ENCODE measurements at regions of chr1 and their contacts with region 1.

Region 1: DNA sequence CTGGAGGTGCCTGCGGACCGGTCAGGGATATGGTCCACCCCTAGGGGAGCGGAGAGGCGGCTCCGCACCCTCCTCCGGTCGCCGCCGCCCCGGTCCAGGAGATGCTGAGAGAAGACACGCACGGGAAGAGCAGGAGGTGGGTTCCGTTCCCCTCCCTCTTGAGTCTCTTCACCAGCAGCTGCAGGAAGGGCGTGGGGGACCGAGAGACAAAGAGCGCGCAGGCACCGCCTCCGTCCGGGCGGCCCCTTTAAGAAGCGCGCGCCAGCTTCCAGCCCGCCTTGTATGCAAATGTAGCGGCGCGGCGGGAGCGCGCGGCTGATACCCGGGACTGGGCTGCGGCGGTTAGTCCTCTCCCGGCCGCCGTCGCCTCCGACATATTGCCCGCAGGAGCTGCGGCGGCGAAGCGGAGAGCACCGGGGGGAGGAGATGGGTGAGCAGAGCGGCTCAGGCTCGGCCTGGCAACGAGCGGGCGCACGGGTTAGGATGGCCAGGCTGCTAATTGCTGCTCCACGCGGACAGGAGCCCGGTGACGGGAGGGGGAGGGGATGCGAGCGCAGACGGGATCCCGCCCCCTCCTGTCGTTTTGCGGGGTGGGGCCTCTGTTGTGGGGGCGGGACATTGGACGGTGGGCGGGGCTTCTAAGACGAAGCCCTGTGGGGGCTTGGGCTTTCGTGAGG is at the start of gene TMEM39B:
- DNase-seq: peak; percentile 89 to 94
- H3K4me3 ChIP-seq: peak within 1 kb of the TSS; percentile 73 to 90 (median 80)
- H3K27ac ChIP-seq: peak within 1 kb of the TSS; percentile 95
- H3K4me1 ChIP-seq: peaks cover 0 to 16% (median 7%) of the 10 kb centered on the region in 4 experiments; a peak in 6 of 7 replicates
- H3K27me3 ChIP-seq: no peaks in the 10 kb centered on the region; a peak in 1 of 7 replicates
- CTCF ChIP-seq: no peak
- EP300 ChIP-seq: 0 out of 3 replicates have a peak, but pooled peaks of 1 of the 2 experiments have one; percentile 15
- POLR2A ChIP-seq: peak; percentile 60 to 86; a peak in 2 of 3 replicates
- RAD21 ChIP-seq: no peak
- total RNA-seq, gene TMEM39B: 24.6 and 25.3 TPM in 2 replicates

Region 2: DNA sequence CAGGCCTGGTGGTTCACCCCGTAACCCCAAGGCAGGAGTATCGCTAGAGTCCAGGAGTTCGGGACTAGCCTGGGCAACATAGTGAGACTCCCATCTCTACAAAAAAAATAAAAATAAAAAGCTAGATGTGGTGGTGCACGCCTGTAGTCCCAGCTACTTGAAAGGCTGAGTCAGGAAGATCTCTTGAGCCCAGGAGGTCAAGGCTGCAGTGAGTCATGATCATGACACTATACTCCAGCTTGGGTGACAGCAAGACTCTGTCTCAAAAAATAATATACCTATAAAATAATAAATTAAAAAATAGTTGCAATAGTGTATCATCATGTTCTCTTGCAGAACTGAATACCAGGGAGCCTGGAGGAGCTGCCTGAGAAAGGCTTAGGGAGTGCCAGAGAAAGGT is 19.9 kb before region 1 on chr1:
- CTCF ChIA-PET with region 1: interaction called, 4 read pairs
- POLR2A ChIA-PET with region 1: interaction called, 10 read pairs
- DNase-seq: no peak
- H3K4me3 ChIP-seq: no peak overlapping the region
- H3K27ac ChIP-seq: no peak overlapping the region
- H3K4me1 ChIP-seq: no peaks in the 10 kb centered on the region
- H3K27me3 ChIP-seq: no peaks in the 10 kb centered on the region
- CTCF ChIP-seq: no peak
- EP300 ChIP-seq: no peak
- POLR2A ChIP-seq: no peak
- RAD21 ChIP-seq: no peak

Region 3: GRCh38 chr1:32094746-32095521 is 22.2 kb after region 1 on chr1:
- CTCF ChIA-PET with region 1: interaction called, 5 read pairs
- POLR2A ChIA-PET with region 1: interaction called, 14 read pairs
- DNase-seq: no peak
- H3K4me3 ChIP-seq: no peak overlapping the region
- H3K27ac ChIP-seq: no peak overlapping the region
- H3K4me1 ChIP-seq: no peaks in the 10 kb centered on the region
- H3K27me3 ChIP-seq: no peaks in the 10 kb centered on the region
- CTCF ChIP-seq: no peak
- EP300 ChIP-seq: no peak
- POLR2A ChIP-seq: no peak
- RAD21 ChIP-seq: no peak

Region 4: DNA sequence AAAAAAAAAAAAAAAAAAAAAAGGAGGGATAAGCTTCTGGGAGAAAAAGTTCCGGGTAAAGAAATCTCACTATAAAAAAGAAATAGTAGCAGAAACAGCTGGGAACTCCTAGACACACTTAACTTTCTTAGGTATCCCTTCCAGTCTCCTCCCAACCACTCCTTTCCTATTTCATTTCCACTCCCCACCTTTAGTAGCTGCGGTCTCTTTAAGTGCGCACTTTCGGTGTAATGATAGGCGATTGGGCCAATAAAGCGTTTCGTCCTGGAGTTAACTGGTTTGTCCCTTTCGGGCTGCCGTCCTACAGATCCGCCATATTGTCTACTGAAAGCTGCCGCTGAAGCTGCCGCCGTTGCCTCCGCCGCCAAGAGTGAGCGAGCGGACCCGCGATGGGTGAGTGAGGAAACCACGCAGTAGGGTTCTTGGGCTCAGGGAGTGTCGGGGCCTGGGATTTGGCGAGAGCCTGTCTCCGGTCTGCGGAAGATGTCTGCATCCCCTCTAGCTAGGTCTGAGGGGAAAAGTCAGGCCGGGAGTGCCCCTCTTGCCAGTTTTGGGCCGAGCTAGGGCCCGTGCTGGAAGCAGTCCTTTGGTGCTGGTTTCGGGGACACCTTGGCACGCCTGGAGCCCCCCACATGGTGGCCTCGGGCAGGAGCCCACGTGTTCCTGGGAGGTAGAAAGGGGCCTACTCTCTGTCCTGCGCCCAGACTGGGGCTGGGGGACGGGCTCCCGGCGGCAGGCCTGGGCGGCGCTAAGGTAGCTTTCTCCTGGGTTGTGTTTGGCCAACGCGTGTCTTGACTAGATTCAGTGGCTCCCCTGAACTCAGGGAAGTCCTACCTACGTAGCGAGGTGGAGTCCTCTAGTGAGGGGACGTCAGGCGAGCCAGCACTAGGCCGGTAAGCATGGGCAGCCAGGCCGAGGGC is 35.2 kb after region 1 on chr1 and contains the start of gene KPNA6:
- CTCF ChIA-PET with region 1: interaction called, 28 read pairs
- POLR2A ChIA-PET with region 1: interaction called, 32 read pairs
- DNase-seq: peak; percentile 77 to 94
- H3K4me3 ChIP-seq: peak within 1 kb of the TSS; percentile 89 to 100 (median 97)
- H3K27ac ChIP-seq: peak within 1 kb of the TSS; percentile 89
- H3K4me1 ChIP-seq: peaks cover 0 to 1% (median 0%) of the 10 kb centered on the region in 4 experiments; a peak in 1 of 7 replicates
- H3K27me3 ChIP-seq: no peaks in the 10 kb centered on the region
- CTCF ChIP-seq: 0 out of 4 replicates have a peak, but pooled peaks of 1 of the 3 experiments have one; percentile 3
- EP300 ChIP-seq: peak in 1 of 2 experiments; percentile 16; a peak in 1 of 3 replicates
- POLR2A ChIP-seq: peak in 1 of 2 experiments; percentile 78; a peak in 2 of 3 replicates
- RAD21 ChIP-seq: no peak
- total RNA-seq, gene KPNA6: 116 and 120 TPM in 2 replicates

Region 5: DNA sequence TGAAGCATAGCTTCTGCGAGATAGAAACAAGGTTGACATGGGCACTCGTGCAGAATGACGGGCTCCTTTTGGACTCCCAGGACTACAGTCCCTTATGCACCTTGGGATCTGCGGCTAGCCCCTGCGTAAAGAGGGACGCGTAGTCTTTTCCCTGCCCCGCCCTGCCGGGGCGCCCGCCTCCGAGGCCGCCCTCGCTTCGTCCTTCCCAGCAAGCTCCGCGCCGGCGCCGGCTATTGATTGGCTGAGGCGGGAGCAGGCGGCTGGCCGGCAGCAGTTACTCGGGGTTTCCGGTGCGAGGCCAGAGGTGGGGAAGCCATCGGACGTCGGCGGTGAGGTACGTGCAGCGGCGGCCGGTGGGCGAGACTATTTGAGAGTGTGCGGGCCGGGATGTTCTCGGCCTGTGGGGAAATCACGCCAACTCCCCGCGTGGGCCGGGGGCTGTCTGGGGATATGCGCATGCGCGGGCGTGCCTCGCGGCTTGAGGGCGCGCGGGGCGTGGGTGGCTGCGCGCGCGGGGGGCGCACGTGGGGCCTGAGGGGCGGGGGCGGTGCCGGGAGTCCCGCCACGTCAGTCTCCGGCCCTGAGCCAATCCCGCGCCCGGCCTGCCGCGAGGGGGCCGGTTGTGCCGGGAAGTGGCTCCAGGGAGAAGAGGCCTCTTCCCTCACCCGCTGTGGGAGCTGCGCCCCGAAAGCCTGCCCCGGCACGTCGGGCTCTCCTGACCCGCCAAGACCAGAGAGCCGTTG is 106.9 kb after region 1 on chr1 and contains the start of gene TXLNA:
- CTCF ChIA-PET with region 1: no interaction called
- POLR2A ChIA-PET with region 1: interaction called, 13 read pairs
- DNase-seq: peak; percentile 77 to 95
- H3K4me3 ChIP-seq: peak within 1 kb of the TSS; percentile 44 to 89 (median 76)
- H3K27ac ChIP-seq: peak within 1 kb of the TSS; percentile 69; the same call in 1 of the 2 replicates
- H3K4me1 ChIP-seq: peaks cover 8 to 15% (median 10%) of the 10 kb centered on the region in 4 experiments; a peak in 6 of 7 replicates
- H3K27me3 ChIP-seq: no peaks in the 10 kb centered on the region
- CTCF ChIP-seq: no peak
- EP300 ChIP-seq: no peak
- POLR2A ChIP-seq: peak; percentile 58 to 86
- RAD21 ChIP-seq: no peak
- total RNA-seq, gene TXLNA: 45.4 and 46.9 TPM in 2 replicates

Region 6: DNA sequence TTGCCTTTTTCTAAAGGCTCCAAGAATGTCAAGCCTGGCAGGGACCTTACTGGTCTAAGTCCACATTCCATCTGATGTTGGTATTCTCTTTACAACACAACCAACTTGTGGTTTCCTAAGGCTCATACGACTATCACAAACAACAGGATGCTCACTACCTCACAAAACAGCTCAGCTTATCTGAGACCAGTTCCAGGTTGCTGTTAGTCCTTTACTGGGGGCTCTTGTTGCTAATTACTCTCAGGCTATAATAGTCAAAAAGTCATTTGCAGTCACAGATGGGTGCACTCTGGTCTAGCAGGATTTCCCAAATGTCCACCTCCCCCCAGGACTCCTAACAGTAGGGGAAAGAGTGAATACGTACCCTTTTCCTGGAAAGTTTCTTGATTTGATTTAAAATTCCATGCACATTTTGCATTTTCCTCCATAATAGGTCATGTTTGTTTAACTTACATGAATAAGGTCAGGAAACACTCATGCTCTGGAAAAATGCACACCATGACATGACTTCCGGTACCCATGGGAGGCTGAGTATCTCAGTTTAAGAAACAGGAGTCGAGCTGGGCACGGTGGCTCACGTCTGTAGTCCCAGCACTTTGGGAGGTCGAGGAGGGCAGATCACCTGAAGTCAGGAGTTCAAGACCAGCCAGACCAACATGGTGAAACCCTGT is 194.3 kb after region 1 on chr1:
- CTCF ChIA-PET with region 1: no interaction called
- POLR2A ChIA-PET with region 1: no interaction called
- DNase-seq: no peak
- H3K4me3 ChIP-seq: no peak overlapping the region
- H3K27ac ChIP-seq: no peak overlapping the region
- H3K4me1 ChIP-seq: peaks cover 0 to 3% (median 2%) of the 10 kb centered on the region in 4 experiments; a peak in 3 of 7 replicates
- H3K27me3 ChIP-seq: no peaks in the 10 kb centered on the region
- CTCF ChIP-seq: no peak
- EP300 ChIP-seq: no peak
- POLR2A ChIP-seq: no peak
- RAD21 ChIP-seq: no peak

Measured in H1 (cell line).